PC-9 (cell line): ENCODE measurements at regions of chr3 and their contacts with region 1.

Region 1: GRCh38 chr3:196518966-196519717 is 4.0 kb upstream of the SMCO1 start:
- DNase-seq: peak; percentile 70 to 75
- H3K4me3 ChIP-seq: no peak overlapping the region
- H3K27ac ChIP-seq: no peak overlapping the region
- H3K4me1 ChIP-seq: peaks cover 8% of the 10 kb centered on the region
- H3K27me3 ChIP-seq: no peaks in the 10 kb centered on the region
- CTCF ChIP-seq: peak; percentile 97

Region 2: GRCh38 chr3:196023947-196024346 is 495.2 kb before region 1 on chr3:
- CTCF ChIA-PET with region 1: interaction called, 7 read pairs
- POLR2A ChIA-PET with region 1: no interaction called
- intact Hi-C with region 1: loop called (anchors 2 kb)
- DNase-seq: peak in 1 of 2 experiments; percentile 13
- H3K4me3 ChIP-seq: no peak overlapping the region
- H3K27ac ChIP-seq: no peak overlapping the region
- H3K4me1 ChIP-seq: no peaks in the 10 kb centered on the region
- H3K27me3 ChIP-seq: no peaks in the 10 kb centered on the region
- CTCF ChIP-seq: no peak

Region 3: GRCh38 chr3:196192036-196192523 is 327.1 kb before region 1 on chr3:
- CTCF ChIA-PET with region 1: no interaction called
- POLR2A ChIA-PET with region 1: no interaction called
- intact Hi-C with region 1: loop called (anchors 2 kb)
- DNase-seq: no peak
- H3K4me3 ChIP-seq: no peak overlapping the region
- H3K27ac ChIP-seq: no peak overlapping the region
- H3K4me1 ChIP-seq: peaks cover 14% of the 10 kb centered on the region
- H3K27me3 ChIP-seq: no peaks in the 10 kb centered on the region
- CTCF ChIP-seq: no peak; the same call in 1 of the 2 replicates

Region 4: DNA sequence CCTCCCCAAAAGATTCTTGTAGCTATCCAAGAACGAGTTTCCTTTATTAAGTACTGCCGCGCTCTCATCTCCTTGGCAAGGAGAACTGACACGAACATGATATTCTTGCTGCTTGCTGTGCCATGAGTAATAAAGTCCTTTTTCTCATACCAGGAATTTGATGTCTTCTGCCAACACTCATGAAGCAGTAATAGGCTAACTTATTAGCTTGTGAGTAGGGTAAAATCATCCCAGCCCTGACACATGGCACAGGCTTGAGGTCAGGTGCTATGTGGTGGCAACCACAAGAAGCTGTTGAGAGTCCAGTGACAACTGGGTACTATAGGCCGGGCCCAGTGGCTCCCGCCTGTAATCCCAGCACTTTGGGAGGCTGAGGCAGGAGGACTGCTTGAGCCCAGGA is 64.2 kb before region 1 on chr3:
- CTCF ChIA-PET with region 1: interaction called, 13 read pairs
- POLR2A ChIA-PET with region 1: no interaction called
- intact Hi-C with region 1: no loop called
- DNase-seq: no peak
- H3K4me3 ChIP-seq: no peak overlapping the region
- H3K27ac ChIP-seq: no peak overlapping the region
- H3K4me1 ChIP-seq: no peaks in the 10 kb centered on the region
- H3K27me3 ChIP-seq: no peaks in the 10 kb centered on the region
- CTCF ChIP-seq: no peak

Region 5: GRCh38 chr3:196803891-196804468 is 284.8 kb after region 1 on chr3:
- CTCF ChIA-PET with region 1: no interaction called
- POLR2A ChIA-PET with region 1: no interaction called
- intact Hi-C with region 1: no loop called
- DNase-seq: no peak
- H3K4me3 ChIP-seq: no peak overlapping the region
- H3K27ac ChIP-seq: no peak overlapping the region
- H3K4me1 ChIP-seq: no peaks in the 10 kb centered on the region
- H3K27me3 ChIP-seq: no peaks in the 10 kb centered on the region
- CTCF ChIP-seq: no peak